ENCODE measurements at regions of chr2 and their contacts with region 1.

Region 1: GRCh38 chr2:237923481-237924163 is 43.2 kb upstream of the UBE2F start:
- DNase-seq: peak; percentile 19 to 98
- H3K4me3 ChIP-seq: peak overlapping the region in 1 of 4 experiments; percentile 34; a peak in 1 of 8 replicates
- H3K27ac ChIP-seq: no peak overlapping the region
- H3K4me1 ChIP-seq: peaks cover 0 to 6% (median 4%) of the 10 kb centered on the region in 4 experiments; a peak in 5 of 7 replicates
- H3K27me3 ChIP-seq: no peaks in the 10 kb centered on the region; a peak in 2 of 7 replicates
- CTCF ChIP-seq: peak; percentile 85 to 90 (median 90)
- EP300 ChIP-seq: no peak
- POLR2A ChIP-seq: no peak
- RAD21 ChIP-seq: peak; percentile 78 to 85

Region 2: DNA sequence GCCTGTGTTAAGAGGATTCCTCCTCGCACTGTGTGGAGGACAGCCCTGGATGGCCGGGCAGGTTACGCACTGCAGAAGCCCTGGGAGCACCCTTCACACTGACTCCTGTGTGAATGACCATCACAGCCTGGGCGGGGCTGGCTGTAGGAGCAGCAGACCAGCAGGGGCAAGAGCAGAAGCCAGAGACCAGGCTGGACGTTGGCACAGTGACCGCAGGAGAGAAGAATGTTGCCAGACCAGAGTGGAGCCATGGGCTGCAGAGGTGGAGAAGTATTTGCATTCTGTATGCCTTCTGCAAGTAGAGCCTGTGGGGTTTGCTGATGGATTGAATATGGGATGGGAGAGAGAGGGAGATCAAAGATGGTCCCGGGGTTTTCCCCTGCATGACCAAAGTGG is 273.2 kb before region 1 on chr2:
- CTCF ChIA-PET with region 1: no interaction called
- POLR2A ChIA-PET with region 1: no interaction called
- DNase-seq: peak in 1 of 2 experiments; percentile 38
- H3K4me3 ChIP-seq: no peak overlapping the region
- H3K27ac ChIP-seq: no peak overlapping the region
- H3K4me1 ChIP-seq: no peaks in the 10 kb centered on the region; a peak in 1 of 7 replicates
- H3K27me3 ChIP-seq: no peaks in the 10 kb centered on the region
- CTCF ChIP-seq: no peak
- EP300 ChIP-seq: no peak
- POLR2A ChIP-seq: no peak
- RAD21 ChIP-seq: no peak

Region 3: DNA sequence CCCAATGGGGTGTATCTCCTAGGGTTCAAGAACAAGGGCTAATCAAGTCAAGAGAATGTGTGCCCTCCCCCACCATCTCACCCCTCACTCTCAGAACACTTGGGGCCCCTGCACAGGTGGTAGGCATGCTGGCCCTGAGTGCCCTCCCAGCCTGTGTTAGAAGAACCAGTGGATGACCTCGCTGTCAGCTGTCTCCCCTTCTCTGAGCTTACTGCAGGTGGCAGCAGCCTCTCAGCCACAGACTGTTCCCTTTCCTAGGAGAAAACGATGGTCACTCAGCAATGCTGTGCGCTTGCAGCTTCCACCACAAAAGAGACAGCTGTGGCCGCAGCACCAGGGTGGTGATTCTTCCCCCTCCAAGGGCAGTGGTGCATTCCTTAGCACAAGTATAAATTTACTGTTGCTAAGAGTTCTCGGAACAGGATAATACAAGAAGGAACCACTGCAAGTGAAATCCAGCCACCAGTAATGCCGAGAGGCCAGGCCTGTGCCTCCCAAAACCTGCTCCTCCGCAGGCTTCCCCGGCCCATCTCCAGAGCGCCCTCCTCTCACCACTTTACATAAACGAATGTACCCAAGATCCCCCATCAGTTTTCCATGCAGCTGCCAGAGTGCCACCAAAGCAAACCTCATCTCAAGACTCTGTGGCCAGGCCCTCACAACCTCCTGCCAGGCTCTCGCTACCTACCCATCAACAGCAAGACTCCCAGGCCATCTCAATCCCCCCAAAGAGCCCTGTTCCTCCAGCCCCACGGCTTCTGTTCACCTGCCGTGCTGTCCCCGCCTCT is 65.1 kb before region 1 on chr2:
- CTCF ChIA-PET with region 1: interaction called, 12 read pairs
- POLR2A ChIA-PET with region 1: no interaction called
- DNase-seq: peak; percentile 36 to 69
- H3K4me3 ChIP-seq: peak overlapping the region; percentile 24 to 56 (median 44)
- H3K27ac ChIP-seq: no peak overlapping the region
- H3K4me1 ChIP-seq: peaks cover 0 to 10% (median 4%) of the 10 kb centered on the region in 4 experiments; a peak in 6 of 7 replicates
- H3K27me3 ChIP-seq: peaks cover 9 to 32% (median 23%) of the 10 kb centered on the region in 4 experiments
- CTCF ChIP-seq: peak; percentile 89 to 92 (median 92)
- EP300 ChIP-seq: no peak
- POLR2A ChIP-seq: no peak
- RAD21 ChIP-seq: peak; percentile 96 to 97

Region 4: GRCh38 chr2:237955640-237956401 is 32.2 kb after region 1 on chr2:
- CTCF ChIA-PET with region 1: interaction called, 11 read pairs
- POLR2A ChIA-PET with region 1: no interaction called
- DNase-seq: peak in 1 of 2 experiments; percentile 65
- H3K4me3 ChIP-seq: peak overlapping the region; percentile 39 to 77 (median 51)
- H3K27ac ChIP-seq: no peak overlapping the region
- H3K4me1 ChIP-seq: peaks cover 0 to 3% (median 0%) of the 10 kb centered on the region in 4 experiments; a peak in 1 of 7 replicates
- H3K27me3 ChIP-seq: peaks cover 0 to 18% (median 10%) of the 10 kb centered on the region in 4 experiments; a peak in 5 of 7 replicates
- CTCF ChIP-seq: no peak
- EP300 ChIP-seq: no peak
- POLR2A ChIP-seq: no peak
- RAD21 ChIP-seq: no peak

Region 5: GRCh38 chr2:238042849-238043584 is 119.4 kb after region 1 on chr2:
- CTCF ChIA-PET with region 1: no interaction called
- POLR2A ChIA-PET with region 1: no interaction called
- DNase-seq: no peak
- H3K4me3 ChIP-seq: no peak overlapping the region
- H3K27ac ChIP-seq: no peak overlapping the region
- H3K4me1 ChIP-seq: no peaks in the 10 kb centered on the region
- H3K27me3 ChIP-seq: no peaks in the 10 kb centered on the region
- CTCF ChIP-seq: no peak
- EP300 ChIP-seq: no peak
- POLR2A ChIP-seq: no peak
- RAD21 ChIP-seq: no peak

Measured in H1 (cell line).